Gastrocnemius medialis (tissue), 4 donors: ENCODE measurements at regions of chr15 and their contacts with region 1.

Region 1: DNA sequence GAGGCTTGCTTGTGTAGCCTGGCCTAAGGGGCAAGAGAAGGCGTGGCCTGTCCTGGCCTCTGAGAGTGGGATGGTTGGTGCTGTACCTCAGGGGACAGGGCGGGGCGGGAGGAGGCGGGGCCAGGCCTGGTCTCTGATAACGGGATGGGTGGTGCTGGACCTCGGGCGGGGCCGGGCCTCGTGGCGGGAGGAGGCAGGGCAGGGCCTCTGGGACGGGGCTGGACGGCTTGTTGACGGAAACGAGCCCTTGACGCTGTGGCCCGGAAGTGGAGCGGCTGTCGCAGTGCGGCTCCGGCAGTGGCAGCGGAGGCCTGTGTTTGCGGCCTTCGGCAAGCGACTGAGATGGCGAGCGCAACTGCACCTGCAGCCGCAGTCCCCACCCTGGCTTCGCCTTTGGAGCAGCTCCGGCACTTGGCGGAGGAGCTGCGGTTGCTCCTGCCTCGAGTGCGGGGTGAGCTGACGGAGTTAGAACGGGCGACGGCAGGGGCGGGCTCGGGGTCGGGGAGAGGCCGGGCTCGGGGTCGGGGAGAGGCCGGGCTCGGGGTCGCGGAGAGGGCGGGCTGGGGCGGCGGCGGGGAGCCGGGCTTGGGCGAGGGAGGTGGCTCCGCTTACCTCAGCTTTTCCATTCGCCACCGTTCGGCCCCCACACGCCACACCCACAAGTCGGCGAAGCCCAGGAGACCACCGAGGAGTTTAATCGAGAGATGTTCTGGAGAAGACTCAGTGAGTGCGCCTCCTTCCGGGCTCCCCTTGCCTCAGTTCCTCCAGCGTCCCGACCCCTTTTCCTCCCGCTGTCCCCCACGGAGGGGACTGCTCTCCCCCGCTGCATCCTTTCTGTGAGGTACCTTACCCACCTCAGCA is at the start of gene CCNDBP1:
- DNase-seq: peak; percentile 94 to 97
- ATAC-seq: peak; percentile 89 to 92
- H3K4me3 ChIP-seq: peak within 1 kb of the TSS; percentile 70 to 89 (median 80)
- H3K27ac ChIP-seq: peak within 1 kb of the TSS; percentile 87 to 95 (median 95)
- H3K4me1 ChIP-seq: peaks cover 46 to 55% of the 10 kb centered on the region in 2 donors
- H3K27me3 ChIP-seq: no peaks in the 10 kb centered on the region
- CTCF ChIP-seq: peak in 2 of 5 experiments; percentile 38 to 42
- POLR2A ChIP-seq: peak; percentile 80 to 88
- total RNA-seq, gene CCNDBP1: 32.4 to 108 (median 92.6) TPM

Region 2: GRCh38 chr15:42858540-42858939 is 326.8 kb before region 1 on chr15:
- in situ Hi-C with region 1: no loop called
- intact Hi-C with region 1: no loop called
- DNase-seq: no peak
- ATAC-seq: no peak
- H3K4me3 ChIP-seq: no peak overlapping the region
- H3K27ac ChIP-seq: peak overlapping the region in 1 of 4 donors; percentile 19
- H3K4me1 ChIP-seq: peaks cover 11 to 15% of the 10 kb centered on the region in 2 donors
- H3K27me3 ChIP-seq: no peaks in the 10 kb centered on the region
- CTCF ChIP-seq: no peak
- POLR2A ChIP-seq: no peak

Region 3: GRCh38 chr15:43105778-43106485 is 79.5 kb before region 1 on chr15 and contains the start of gene UBR1:
- in situ Hi-C with region 1: no loop called
- intact Hi-C with region 1: loop called (anchors 2 kb)
- DNase-seq: peak; percentile 82 to 90
- ATAC-seq: peak; percentile 92 to 94
- H3K4me3 ChIP-seq: peak within 1 kb of the TSS; percentile 69 to 98 (median 84)
- H3K27ac ChIP-seq: peak within 1 kb of the TSS; percentile 77 to 95 (median 90)
- H3K4me1 ChIP-seq: peaks cover 32 to 48% of the 10 kb centered on the region in 2 donors
- H3K27me3 ChIP-seq: no peaks in the 10 kb centered on the region
- CTCF ChIP-seq: no peak
- POLR2A ChIP-seq: peak; percentile 72 to 73
- total RNA-seq, gene UBR1: 20.2 to 31.3 (median 22.5) TPM

Region 4: GRCh38 chr15:43204016-43204901 is 18.9 kb after region 1 on chr15:
- in situ Hi-C with region 1: no loop called
- intact Hi-C with region 1: loop called (anchors 1 kb)
- DNase-seq: peak in 1 of 2 donors; percentile 34
- ATAC-seq: peak in 1 of 2 donors; percentile 74
- H3K4me3 ChIP-seq: no peak overlapping the region
- H3K27ac ChIP-seq: no peak overlapping the region
- H3K4me1 ChIP-seq: peaks cover 0 to 5% of the 10 kb centered on the region in 2 donors
- H3K27me3 ChIP-seq: no peaks in the 10 kb centered on the region
- CTCF ChIP-seq: peak; percentile 26 to 66 (median 63)
- POLR2A ChIP-seq: no peak

Region 5: DNA sequence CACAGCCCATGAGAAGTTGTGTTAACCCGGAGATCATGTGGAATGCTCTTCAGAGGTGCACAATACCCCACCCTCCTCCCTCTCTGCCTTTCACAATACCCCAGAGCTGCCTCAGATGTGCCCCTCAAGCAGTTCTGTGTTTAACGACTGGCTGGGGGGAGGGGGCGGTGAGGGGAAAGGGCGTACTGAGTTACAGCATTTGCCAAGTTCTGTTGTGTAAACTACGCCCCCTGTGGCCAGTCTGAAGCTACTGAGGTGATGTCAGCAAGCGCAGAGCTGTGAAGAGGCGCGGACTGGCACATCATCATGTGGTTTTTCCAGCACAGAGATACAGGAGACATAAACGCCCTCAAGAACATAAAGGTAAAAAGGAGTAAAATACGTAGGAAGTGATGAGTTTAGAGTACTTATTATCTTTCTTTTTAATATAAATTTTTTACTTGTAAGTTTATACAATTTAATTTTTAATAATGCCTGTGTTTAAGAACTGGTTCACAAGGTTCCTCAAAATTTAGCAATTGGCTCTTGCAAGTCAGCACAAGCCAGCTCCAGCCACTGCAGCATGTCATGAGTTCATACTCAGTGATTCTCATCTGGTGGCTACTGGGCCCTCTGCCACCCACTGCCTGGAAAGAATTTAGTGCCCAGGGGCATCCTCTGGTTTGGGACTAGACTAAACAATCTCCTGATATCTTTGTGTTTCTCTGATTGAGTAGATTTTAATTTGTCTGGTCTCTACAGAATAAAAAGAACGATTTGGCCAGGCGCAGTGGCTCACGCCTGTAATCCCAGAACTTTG is 33.7 kb after region 1 on chr15:
- in situ Hi-C with region 1: no loop called
- intact Hi-C with region 1: no loop called
- DNase-seq: no peak
- ATAC-seq: no peak
- H3K4me3 ChIP-seq: no peak overlapping the region
- H3K27ac ChIP-seq: no peak overlapping the region
- H3K4me1 ChIP-seq: no peaks in the 10 kb centered on the region
- H3K27me3 ChIP-seq: no peaks in the 10 kb centered on the region
- CTCF ChIP-seq: no peak
- POLR2A ChIP-seq: no peak

Region 6: GRCh38 chr15:43239732-43240491 is 54.5 kb after region 1 on chr15:
- in situ Hi-C with region 1: no loop called
- intact Hi-C with region 1: no loop called
- DNase-seq: no peak
- ATAC-seq: no peak
- H3K4me3 ChIP-seq: no peak overlapping the region
- H3K27ac ChIP-seq: no peak overlapping the region
- H3K4me1 ChIP-seq: peaks cover 18 to 36% of the 10 kb centered on the region in 2 donors
- H3K27me3 ChIP-seq: no peaks in the 10 kb centered on the region
- CTCF ChIP-seq: no peak
- POLR2A ChIP-seq: no peak